ENCODE measurements at regions of chr16 and their contacts with region 1.

Region 1: DNA sequence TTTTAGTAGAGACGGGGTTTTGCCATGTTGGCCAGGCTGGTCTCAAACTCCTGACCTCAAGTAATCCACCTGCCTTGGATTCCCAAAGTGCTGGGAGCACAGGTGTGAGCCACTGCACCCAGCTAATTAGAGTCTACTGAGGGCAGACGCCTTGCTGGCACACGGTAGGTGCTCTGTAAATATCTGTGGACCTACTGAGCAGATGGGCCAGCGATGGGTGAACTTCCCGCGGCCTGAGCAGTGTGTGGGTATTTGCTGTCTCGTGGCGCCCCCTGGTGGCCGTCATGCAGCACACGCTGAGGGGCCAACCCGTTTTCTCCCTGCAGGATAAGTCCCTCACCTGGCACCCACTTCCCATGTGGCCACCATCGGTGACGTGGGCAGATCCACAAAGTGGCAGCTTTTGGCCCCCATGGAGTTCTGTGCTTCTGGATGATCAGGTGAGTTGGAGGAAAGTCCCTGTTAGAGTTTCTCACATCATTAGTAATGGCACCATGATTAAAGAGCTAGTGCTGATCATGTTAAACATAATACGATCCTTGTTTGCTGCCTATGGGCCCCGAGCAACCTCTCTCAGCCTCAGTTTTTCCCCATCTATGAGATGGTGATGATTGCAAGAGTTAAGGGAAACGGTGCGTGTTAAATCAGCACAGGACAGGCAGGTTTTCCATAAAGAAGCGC is 40.7 kb downstream of the ZDHHC7 start:
- DNase-seq: peak; percentile 83
- ATAC-seq: peak; percentile 80
- H3K4me3 ChIP-seq: no peak overlapping the region
- H3K4me3 Mint-ChIP-seq: no peak overlapping the region
- H3K27ac ChIP-seq: no peak overlapping the region
- H3K27ac Mint-ChIP-seq: no peak overlapping the region
- H3K4me1 ChIP-seq: peaks cover 3 to 5% of the 10 kb centered on the region in 2 donors
- H3K4me1 Mint-ChIP-seq: peaks cover 4% of the 10 kb centered on the region
- H3K27me3 ChIP-seq: peaks cover 0 to 7% (median 0%) of the 10 kb centered on the region in 4 experiments
- H3K27me3 Mint-ChIP-seq: peaks cover 3% of the 10 kb centered on the region
- CTCF ChIP-seq: peak; percentile 92

Region 2: DNA sequence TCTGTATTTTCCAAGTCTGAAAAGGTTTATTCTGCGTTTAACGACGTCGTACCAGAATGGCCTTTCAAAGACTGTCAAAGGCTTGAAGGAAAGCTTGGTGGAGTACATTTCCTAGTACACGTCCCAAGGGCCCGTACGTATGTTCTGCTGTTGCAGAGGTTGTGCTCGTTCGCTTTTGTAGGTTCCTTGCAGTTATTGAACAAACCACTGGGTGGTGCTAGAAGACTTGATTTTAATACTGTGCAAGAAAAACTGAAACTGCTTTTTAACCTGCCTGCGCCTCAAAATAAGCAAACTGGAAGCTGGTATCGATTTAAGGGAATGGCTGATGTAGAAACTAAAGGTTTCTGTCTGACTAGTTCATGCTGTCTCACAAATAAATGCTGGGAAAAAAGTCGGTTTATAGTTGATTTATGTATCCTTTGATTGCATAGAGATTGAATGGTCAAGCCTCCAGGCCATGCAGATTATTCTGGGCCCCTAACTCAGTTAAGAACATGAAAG is 216.2 kb before region 1 on chr16:
- CTCF ChIA-PET with region 1: interaction called, 59 read pairs
- POLR2A ChIA-PET with region 1: no interaction called
- intact Hi-C with region 1: loop called (anchors 1 kb)
- DNase-seq: peak; percentile 89
- ATAC-seq: peak; percentile 88
- H3K4me3 ChIP-seq: peak overlapping the region in 1 of 5 experiments; percentile 21
- H3K4me3 Mint-ChIP-seq: peak overlapping the region; percentile 12
- H3K27ac ChIP-seq: no peak overlapping the region
- H3K27ac Mint-ChIP-seq: peak overlapping the region; percentile 57
- H3K4me1 ChIP-seq: peaks cover 44 to 47% of the 10 kb centered on the region in 2 donors
- H3K4me1 Mint-ChIP-seq: peaks cover 72% of the 10 kb centered on the region
- H3K27me3 ChIP-seq: no peaks in the 10 kb centered on the region
- H3K27me3 Mint-ChIP-seq: no peaks in the 10 kb centered on the region
- CTCF ChIP-seq: peak; percentile 91

Region 3: DNA sequence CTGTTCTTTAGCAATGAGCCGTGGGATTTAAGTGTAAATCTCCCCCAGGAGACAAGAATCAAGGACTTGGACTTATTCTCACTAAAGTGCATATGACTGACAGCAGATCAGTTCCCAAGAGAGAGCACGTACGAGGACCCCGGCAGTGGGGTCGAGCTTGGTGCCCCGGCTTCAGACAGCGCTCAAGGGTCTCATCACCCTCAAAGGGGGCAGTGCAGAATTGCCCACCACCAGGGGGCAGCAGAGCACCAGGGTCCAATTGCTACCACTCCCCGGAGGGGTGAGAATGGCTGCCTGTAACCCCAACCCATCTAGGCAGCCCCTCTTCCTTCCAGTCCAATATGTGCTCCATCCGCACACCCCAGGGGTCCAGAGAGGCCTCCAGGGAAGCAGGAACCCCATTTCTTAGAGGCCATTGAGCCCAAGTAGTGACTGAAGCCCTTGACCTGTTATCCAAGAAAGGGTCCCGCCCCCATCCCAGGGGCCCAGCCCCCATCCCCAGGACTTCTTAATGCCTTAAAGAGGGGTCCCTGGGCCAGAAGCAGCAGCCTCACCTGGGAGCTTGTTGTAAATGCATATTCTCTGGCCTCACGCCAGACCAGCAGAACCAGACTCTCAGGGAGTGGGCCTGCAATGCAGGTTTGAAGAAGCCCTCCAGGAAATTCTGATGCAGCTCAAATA is 45.4 kb before region 1 on chr16:
- CTCF ChIA-PET with region 1: interaction called, 22 read pairs
- POLR2A ChIA-PET with region 1: no interaction called
- intact Hi-C with region 1: no loop called
- DNase-seq: peak; percentile 66
- ATAC-seq: peak; percentile 53
- H3K4me3 ChIP-seq: no peak overlapping the region
- H3K4me3 Mint-ChIP-seq: no peak overlapping the region
- H3K27ac ChIP-seq: no peak overlapping the region
- H3K27ac Mint-ChIP-seq: no peak overlapping the region
- H3K4me1 ChIP-seq: no peaks in the 10 kb centered on the region
- H3K4me1 Mint-ChIP-seq: peaks cover 1% of the 10 kb centered on the region
- H3K27me3 ChIP-seq: no peaks in the 10 kb centered on the region
- H3K27me3 Mint-ChIP-seq: peaks cover 8% of the 10 kb centered on the region
- CTCF ChIP-seq: peak; percentile 81

Region 4: DNA sequence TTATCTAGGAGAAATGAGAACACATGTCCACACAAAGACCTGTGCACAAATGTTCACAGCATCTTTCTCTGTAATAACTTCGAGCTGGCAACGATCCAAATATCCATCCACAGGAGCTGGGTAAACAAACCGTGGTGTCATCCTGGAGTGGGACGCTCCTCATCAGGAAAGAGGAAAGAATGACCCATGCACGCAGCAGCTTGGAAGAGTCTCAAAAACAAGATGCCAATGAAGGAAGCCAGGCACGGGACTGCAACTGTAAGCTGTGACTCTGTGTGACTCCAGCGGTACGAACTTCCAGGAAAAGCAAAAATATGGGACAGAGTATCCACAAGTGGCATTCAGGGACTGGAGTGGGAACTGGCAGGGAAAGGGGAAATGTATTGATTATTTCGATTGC is 178.4 kb after region 1 on chr16:
- CTCF ChIA-PET with region 1: no interaction called
- POLR2A ChIA-PET with region 1: no interaction called
- intact Hi-C with region 1: no loop called
- DNase-seq: no peak
- ATAC-seq: no peak
- H3K4me3 ChIP-seq: no peak overlapping the region
- H3K4me3 Mint-ChIP-seq: no peak overlapping the region
- H3K27ac ChIP-seq: no peak overlapping the region
- H3K27ac Mint-ChIP-seq: no peak overlapping the region
- H3K4me1 ChIP-seq: no peaks in the 10 kb centered on the region
- H3K4me1 Mint-ChIP-seq: no peaks in the 10 kb centered on the region
- H3K27me3 ChIP-seq: peaks cover 0 to 2% (median 0%) of the 10 kb centered on the region in 4 experiments
- H3K27me3 Mint-ChIP-seq: peaks cover 16% of the 10 kb centered on the region
- CTCF ChIP-seq: no peak

Measured in B cell (primary cell).